ENCODE measurements at regions of chr18 and their contacts with region 1.

Region 1: DNA sequence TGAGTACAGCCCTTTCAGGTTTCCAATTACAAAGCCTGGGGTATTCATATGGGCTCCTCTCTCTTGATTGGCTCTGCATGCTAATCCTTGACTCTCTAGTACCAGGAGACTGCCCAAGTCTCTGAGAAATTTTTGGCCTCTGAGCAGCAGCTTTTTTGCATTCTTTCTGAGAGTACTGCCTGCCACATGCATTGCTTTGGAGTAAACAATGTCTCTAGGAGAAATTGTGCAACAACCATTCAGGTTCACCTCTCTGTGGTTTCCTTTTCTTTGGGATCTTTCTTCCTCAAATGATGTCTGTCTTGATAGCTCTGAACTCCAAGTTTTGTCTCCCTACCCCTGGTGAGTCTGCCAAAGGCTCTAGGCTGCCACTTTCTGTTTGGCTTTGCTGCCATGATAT is 115.8 kb upstream of the SETBP1 start:
- DNase-seq: peak; percentile 81
- H3K4me3 ChIP-seq: no peak overlapping the region
- H3K27ac ChIP-seq: no peak overlapping the region
- H3K4me1 ChIP-seq: peaks cover 28% of the 10 kb centered on the region
- H3K27me3 ChIP-seq: no peaks in the 10 kb centered on the region
- CTCF ChIP-seq: no peak

Region 2: GRCh38 chr18:44130376-44130942 is 434.5 kb before region 1 on chr18:
- CTCF ChIA-PET with region 1: no interaction called
- dilution Hi-C with region 1: no loop called
- in situ Hi-C with region 1: no loop called
- intact Hi-C with region 1: loop called (anchors 5 kb)
- DNase-seq: peak; percentile 26
- H3K4me3 ChIP-seq: no peak overlapping the region
- H3K27ac ChIP-seq: no peak overlapping the region
- H3K4me1 ChIP-seq: no peaks in the 10 kb centered on the region
- H3K27me3 ChIP-seq: no peaks in the 10 kb centered on the region
- CTCF ChIP-seq: peak; percentile 85 to 87

Region 3: DNA sequence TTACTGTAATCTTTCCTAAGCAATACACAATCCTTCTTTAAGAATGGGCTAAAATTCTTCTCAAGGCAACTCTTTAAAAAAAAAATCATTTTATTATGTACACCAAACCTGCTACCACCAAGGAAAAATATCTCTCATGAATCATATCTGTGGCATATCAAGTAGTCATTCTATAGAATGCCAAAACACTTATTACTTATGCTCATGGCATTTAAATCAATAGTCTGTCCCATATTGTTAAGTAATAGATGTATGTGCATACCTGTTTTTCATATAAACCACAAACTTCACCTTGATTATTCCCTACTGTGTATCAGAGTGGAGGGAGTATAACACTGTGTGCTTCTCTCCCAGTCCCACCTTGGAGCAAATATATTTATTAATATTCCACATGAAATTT is 20.0 kb after region 1 on chr18:
- CTCF ChIA-PET with region 1: no interaction called
- dilution Hi-C with region 1: no loop called
- in situ Hi-C with region 1: no loop called
- intact Hi-C with region 1: loop called (anchors 2 kb)
- DNase-seq: no peak
- H3K4me3 ChIP-seq: no peak overlapping the region
- H3K27ac ChIP-seq: no peak overlapping the region
- H3K4me1 ChIP-seq: peaks cover 14% of the 10 kb centered on the region
- H3K27me3 ChIP-seq: no peaks in the 10 kb centered on the region
- CTCF ChIP-seq: no peak